ENCODE measurements at regions of chr7 and their contacts with region 1.

Region 1: DNA sequence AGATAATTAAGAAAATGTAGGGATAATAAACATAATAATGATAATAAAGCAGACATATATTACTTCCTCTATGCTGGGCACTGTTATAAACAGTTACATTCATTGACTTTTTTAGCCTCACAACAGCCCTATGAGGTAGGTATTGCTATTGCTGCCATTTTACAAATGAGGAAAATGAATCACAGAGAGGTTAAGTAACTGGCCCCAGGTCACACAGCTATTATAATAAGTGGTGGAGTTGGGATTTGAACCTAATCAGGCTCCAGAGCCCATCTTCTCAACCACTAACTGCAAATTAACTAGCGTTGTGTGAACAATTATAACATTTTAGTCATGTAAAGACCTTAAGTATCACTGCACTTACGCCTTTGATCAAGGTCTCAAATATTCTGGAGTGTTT is 62.5 kb upstream of the PIK3CG start:
- DNase-seq: no peak
- H3K4me3 ChIP-seq: no peak overlapping the region
- H3K27ac ChIP-seq: no peak overlapping the region
- H3K4me1 ChIP-seq: no peaks in the 10 kb centered on the region
- H3K27me3 ChIP-seq: no peaks in the 10 kb centered on the region
- CTCF ChIP-seq: no peak
- POLR2A ChIP-seq: no peak

Region 2: DNA sequence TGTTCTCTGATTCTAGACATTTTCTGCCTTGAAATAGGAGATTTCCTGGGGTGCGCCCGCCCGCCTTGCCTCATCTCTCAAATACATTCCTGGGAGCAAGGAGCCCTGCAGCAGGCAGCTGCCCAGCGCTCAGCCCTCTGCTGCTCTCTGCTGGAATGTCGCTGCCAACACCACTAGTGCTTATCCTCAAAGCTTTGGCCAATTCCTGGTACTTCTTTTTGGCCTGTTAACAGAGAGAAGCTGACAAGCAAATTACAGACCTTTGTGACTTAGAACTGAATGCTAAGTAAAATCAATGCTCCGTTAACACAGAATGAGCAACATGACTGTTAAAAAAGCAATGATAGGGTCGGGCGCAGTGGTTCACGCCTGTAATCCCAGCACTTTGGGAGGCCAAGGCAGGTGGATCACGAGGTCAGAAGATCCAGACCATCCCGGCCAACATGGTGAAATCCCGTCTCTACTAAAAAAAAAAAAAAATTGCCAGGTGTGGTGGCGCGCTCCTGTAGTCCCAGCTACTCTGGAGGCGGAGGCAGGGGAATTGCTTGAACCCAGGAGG is 648.6 kb before region 1 on chr7:
- intact Hi-C with region 1: no loop called
- DNase-seq: peak; percentile 81 to 94 (median 87)
- H3K4me3 ChIP-seq: no peak overlapping the region
- H3K27ac ChIP-seq: no peak overlapping the region
- H3K4me1 ChIP-seq: no peaks in the 10 kb centered on the region
- H3K27me3 ChIP-seq: no peaks in the 10 kb centered on the region
- CTCF ChIP-seq: peak; percentile 92 to 98 (median 96)
- POLR2A ChIP-seq: no peak

Region 3: DNA sequence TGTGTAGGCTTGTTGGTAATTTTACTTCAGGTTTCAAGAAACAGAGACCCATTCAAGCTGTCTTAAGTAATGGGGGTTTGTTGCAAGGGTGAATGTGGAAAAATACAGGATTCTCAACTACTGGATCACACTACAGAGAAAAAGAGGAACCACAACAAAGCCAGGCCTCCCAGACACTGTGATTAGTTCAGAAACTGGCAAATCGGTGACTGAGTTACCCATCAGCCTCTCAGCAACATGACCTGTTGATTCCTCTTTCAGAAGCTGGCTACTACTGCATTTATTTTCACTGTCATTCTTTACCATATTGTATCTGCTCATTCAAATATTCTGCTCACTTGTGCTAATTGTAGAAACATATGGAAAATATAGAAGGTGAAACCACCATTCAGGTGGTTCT is 157.6 kb before region 1 on chr7:
- intact Hi-C with region 1: no loop called
- DNase-seq: peak in 1 of 7 donors; percentile 2
- H3K4me3 ChIP-seq: no peak overlapping the region
- H3K27ac ChIP-seq: no peak overlapping the region
- H3K4me1 ChIP-seq: peaks cover 0 to 5% of the 10 kb centered on the region in 2 donors
- H3K27me3 ChIP-seq: no peaks in the 10 kb centered on the region
- CTCF ChIP-seq: no peak
- POLR2A ChIP-seq: no peak

Region 4: DNA sequence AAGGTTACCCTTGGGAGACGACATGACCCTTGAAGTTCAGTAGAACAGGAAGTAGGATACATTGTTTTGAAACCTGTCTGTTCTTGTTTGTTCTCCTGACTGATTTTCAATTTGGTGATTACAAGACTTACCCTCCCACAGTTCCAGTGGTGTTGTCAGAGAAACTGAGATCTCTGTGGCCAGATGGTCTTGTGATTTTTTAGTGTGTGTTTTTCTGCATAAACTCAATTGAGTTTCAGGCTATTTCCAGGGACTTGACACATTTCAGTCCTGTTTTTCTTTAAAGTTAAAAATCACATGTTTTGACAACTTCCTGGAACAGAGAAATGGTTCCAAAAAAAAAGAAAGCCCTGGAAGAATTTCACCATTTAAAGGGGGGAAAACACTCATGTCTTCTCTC is 84.8 kb after region 1 on chr7:
- intact Hi-C with region 1: no loop called
- DNase-seq: no peak
- H3K4me3 ChIP-seq: no peak overlapping the region
- H3K27ac ChIP-seq: no peak overlapping the region
- H3K4me1 ChIP-seq: no peaks in the 10 kb centered on the region
- H3K27me3 ChIP-seq: no peaks in the 10 kb centered on the region
- CTCF ChIP-seq: no peak
- POLR2A ChIP-seq: no peak

Region 5: DNA sequence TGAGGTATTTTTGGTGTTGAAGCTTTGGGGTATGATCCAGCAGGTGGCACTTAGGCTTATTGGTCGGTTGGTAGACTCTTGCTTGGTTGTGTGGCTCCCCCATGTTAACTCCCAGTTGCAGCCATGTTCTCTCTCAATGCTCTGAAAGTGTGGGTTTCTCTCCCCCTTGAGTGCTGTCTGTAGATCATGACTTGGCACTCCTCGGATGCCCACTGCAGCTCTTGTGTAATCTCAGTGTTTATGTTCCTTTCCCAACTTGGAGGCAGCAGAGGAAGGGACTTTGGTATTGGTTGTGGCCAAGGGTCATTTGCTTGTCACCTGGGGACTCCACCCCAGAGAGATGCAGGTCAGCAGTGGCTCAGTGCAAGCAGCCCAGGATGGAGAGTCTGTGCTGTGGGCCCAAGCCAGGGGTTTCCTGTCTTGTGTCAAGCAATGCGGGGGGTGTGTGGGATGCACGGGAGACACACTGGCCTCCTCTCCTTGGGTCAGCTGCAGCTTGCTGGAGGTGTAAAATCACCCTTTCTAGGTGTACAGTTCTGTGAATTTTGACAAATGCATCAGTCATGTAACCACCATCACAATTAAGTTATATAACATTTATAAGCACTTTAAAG is 99.3 kb after region 1 on chr7:
- intact Hi-C with region 1: no loop called
- DNase-seq: no peak
- H3K4me3 ChIP-seq: no peak overlapping the region
- H3K27ac ChIP-seq: no peak overlapping the region
- H3K4me1 ChIP-seq: no peaks in the 10 kb centered on the region
- H3K27me3 ChIP-seq: no peaks in the 10 kb centered on the region
- CTCF ChIP-seq: no peak
- POLR2A ChIP-seq: no peak

Region 6: GRCh38 chr7:106938803-106939202 is 136.2 kb after region 1 on chr7:
- intact Hi-C with region 1: loop called in 1 of 2 experiments (anchors 5 kb)
- DNase-seq: no peak
- H3K4me3 ChIP-seq: no peak overlapping the region
- H3K27ac ChIP-seq: no peak overlapping the region
- H3K4me1 ChIP-seq: no peaks in the 10 kb centered on the region
- H3K27me3 ChIP-seq: no peaks in the 10 kb centered on the region
- CTCF ChIP-seq: no peak
- POLR2A ChIP-seq: no peak